ENCODE measurements at regions of chr5 and their contacts with region 1.

Region 1: DNA sequence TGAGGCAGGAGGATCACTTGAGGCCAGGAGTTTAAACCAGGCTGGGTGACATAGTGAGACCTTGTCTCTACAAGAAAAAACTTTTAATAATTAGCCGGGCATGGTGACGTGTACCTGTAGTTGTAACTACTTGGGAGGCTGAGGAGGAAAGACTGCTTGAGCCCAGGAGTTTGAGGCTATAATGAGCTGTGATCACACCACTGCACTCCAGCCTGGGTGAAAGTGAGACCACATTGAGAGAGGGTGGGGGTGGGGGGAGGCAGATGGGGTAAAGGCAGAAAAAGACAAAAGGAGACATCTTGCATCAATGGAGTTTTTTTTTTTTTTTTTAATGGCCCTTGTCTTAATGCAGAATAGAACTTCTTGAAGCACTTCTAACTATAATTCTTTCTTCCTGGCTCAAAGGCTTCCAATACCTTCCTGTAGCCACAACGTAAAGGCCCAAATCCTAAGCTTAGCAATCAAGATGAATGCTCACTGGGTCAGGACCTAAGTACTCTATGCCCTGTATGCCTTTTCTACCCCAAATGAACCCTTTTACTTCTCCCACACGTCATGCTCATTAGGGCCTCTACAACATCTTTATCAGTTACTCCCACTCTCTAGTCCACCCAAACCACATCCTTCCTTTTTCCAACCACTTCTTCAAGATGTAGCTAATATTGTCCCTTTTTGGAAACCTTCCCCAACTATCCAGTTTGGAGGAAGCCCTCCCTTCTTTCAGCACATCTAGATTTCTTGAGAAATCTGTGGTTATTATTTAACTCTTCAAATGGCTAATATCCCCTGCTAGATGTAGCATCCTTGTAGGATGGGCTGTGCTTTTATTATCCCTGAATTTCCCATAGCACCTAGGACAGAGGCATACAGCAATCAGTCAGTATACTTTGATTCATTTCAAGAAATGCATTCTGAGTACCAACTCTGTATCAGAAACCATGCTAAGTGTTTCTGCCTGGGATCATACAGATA is 40.8 kb downstream of the CSF2 start:
- DNase-seq: no peak
- H3K4me3 ChIP-seq: no peak overlapping the region
- H3K4me3 Mint-ChIP-seq: peak overlapping the region in 5 of 8 donors; percentile 12 to 62 (median 37)
- H3K27ac ChIP-seq: no peak overlapping the region
- H3K27ac Mint-ChIP-seq: peak overlapping the region in 4 of 7 donors; percentile 6 to 77 (median 70)
- H3K4me1 ChIP-seq: peaks cover 77% of the 10 kb centered on the region
- H3K4me1 Mint-ChIP-seq: peaks cover 50 to 71% (median 57%) of the 10 kb centered on the region in 4 donors
- H3K27me3 ChIP-seq: no peaks in the 10 kb centered on the region
- H3K27me3 Mint-ChIP-seq: no peaks in the 10 kb centered on the region

Region 2: DNA sequence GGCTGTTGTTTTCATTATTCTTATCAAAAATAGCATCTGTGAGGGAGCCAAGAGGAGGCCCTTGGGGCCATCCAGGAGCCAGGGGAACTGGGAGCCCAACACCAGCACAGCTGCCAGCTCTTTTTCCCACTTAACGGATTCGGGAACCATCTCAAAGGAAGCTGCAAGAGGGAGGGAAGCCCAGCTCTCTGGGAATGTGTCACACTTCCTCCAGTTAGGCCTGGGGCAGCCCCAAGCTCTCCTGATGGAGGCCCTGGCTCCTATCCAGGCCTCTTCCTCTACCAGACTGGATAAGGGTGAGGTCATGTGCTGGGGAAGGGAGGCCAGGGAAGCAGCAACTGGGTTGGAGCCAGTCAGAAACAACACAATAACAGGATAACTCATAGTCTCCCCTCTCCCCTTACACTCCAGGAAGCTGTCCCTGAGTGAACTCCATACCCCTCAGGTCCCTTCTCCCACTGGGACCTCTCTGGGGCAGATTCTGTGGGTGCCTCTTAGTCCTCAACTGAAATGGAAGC is 28.1 kb before region 1 on chr5:
- CTCF ChIA-PET with region 1: interaction called, 3 read pairs
- POLR2A ChIA-PET with region 1: no interaction called
- intact Hi-C with region 1: loop called (anchors 5 kb)
- DNase-seq: no peak
- H3K4me3 ChIP-seq: no peak overlapping the region
- H3K4me3 Mint-ChIP-seq: no peak overlapping the region
- H3K27ac ChIP-seq: no peak overlapping the region
- H3K27ac Mint-ChIP-seq: peak overlapping the region in 1 of 7 donors; percentile 56
- H3K4me1 ChIP-seq: peaks cover 28% of the 10 kb centered on the region
- H3K4me1 Mint-ChIP-seq: peaks cover 20 to 72% (median 45%) of the 10 kb centered on the region in 4 donors
- H3K27me3 ChIP-seq: no peaks in the 10 kb centered on the region
- H3K27me3 Mint-ChIP-seq: no peaks in the 10 kb centered on the region

Region 3: DNA sequence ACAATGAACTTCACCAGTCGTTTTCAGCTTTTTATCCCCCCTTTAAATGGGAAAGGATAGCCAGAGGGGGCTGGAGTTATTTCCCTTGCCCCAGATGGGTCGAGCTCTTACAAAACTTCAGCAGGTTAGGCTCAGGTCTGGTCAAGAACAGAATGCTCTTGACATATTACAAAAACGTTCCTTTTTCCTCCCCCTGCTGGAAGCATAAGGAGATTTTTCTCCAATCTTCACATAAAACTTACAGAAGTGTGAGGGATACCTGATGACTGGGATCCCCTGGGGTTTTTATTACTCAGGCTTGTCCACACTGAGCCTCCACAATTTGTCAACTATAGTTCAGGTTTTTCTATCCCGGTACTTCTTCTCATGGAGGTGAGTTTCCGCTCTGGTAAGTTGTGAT is 19.9 kb after region 1 on chr5:
- CTCF ChIA-PET with region 1: interaction called, 10 read pairs
- POLR2A ChIA-PET with region 1: no interaction called
- intact Hi-C with region 1: no loop called
- DNase-seq: peak in 4 of 5 donors; percentile 21 to 31 (median 28)
- H3K4me3 ChIP-seq: no peak overlapping the region
- H3K4me3 Mint-ChIP-seq: no peak overlapping the region
- H3K27ac ChIP-seq: no peak overlapping the region
- H3K27ac Mint-ChIP-seq: peak overlapping the region in 2 of 7 donors; percentile 26 to 70
- H3K4me1 ChIP-seq: no peaks in the 10 kb centered on the region
- H3K4me1 Mint-ChIP-seq: peaks cover 0 to 12% (median 0%) of the 10 kb centered on the region in 4 donors
- H3K27me3 ChIP-seq: no peaks in the 10 kb centered on the region
- H3K27me3 Mint-ChIP-seq: peaks cover 1 to 4% of the 10 kb centered on the region in 2 donors